ENCODE measurements at regions of chr3 and their contacts with region 1.

Region 1: DNA sequence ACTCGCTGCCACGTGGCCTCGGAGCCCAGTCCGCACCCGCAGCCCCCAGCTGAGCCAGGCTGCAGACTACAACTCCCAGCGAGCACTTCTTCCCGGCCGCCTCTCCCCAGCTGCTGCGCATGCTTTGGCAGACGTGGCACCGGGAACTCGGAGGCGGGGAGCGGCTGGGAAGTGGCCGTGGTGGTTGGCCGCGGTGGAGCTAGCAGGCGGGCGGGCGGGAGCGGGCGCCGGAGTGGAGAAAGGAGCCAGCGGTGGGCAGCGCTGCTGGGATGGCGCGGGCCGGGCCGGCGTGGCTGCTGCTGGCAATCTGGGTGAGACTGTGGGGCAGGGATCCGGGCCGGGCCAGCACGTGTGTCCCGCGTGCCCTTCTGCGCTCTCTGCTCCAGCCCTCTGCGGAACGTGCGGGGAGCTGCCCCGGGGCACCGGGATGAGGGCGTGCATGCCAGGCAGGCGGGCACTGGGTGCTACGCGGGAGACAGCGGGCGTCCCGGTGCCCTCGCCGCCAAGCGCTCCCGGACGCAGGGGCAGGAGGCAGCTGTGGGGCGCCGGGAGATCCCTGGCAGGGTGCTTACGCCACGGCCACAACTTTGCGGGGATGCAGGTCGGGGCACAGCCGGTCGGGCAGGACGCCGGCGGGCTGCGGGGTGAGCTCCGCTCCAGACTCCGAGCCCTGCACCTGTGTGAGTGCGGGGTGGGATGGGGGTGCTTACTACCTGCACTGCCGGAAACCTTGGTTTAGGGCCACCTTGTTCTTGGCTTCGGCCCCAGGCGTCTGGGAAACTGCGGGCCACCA is at the start of gene PDIA5:
- DNase-seq: peak; percentile 83 to 90 (median 86)
- ATAC-seq: peak; percentile 92
- H3K4me3 ChIP-seq: peak within 1 kb of the TSS; percentile 83
- H3K27ac ChIP-seq: peak within 1 kb of the TSS; percentile 72
- H3K4me1 ChIP-seq: peaks cover 25 to 34% of the 10 kb centered on the region in 2 experiments
- H3K27me3 ChIP-seq: no peaks in the 10 kb centered on the region
- CTCF ChIP-seq: no peak
- EP300 ChIP-seq: no peak
- POLR2A ChIP-seq: peak; percentile 75
- RAD21 ChIP-seq: no peak
- polyA plus RNA-seq, gene PDIA5: 3.4 to 4.7 TPM

Region 2: DNA sequence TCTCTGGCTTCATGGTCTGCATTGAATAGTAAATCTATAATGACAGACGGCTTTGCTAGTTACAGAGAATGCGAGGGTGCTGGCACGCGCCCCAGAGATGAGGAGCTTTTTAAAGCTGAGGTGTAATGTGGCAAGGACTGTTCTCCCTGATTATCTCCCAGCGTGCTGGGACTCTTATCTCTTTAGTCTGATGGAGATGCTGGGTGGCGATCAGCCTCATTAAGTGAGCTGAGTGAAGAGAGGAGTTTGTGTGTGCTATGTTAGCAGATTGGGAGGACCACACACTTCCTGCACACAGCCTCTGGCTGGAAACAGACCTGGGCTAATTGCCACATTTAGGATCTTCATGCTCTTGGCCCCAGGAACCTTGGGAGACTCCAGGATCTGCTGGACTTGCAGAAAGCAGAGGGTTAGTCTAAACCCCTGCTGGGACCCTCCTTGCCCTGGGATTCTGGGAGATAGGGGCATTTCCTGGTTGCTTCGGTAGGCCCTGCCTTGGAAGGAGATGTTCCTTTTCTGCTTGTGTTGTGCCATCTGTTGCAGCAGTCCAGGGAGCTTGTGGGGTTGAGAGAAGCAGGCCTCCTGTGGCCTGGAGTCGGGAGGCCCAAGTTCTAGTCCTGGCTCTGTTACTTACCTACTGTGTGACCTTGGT is 14.8 kb after region 1 on chr3:
- CTCF ChIA-PET with region 1: no interaction called
- POLR2A ChIA-PET with region 1: interaction called, 20 read pairs
- in situ Hi-C with region 1: no loop called
- intact Hi-C with region 1: no loop called
- DNase-seq: peak in 2 of 4 experiments; percentile 22 to 54
- ATAC-seq: peak; percentile 4; the same call in 2 of the 3 replicates
- H3K4me3 ChIP-seq: no peak overlapping the region
- H3K27ac ChIP-seq: peak overlapping the region; percentile 60
- H3K4me1 ChIP-seq: peaks cover 36 to 80% of the 10 kb centered on the region in 2 experiments
- H3K27me3 ChIP-seq: no peaks in the 10 kb centered on the region
- CTCF ChIP-seq: no peak
- EP300 ChIP-seq: no peak
- POLR2A ChIP-seq: no peak
- RAD21 ChIP-seq: no peak

Region 3: GRCh38 chr3:123412811-123413604 is 345.9 kb after region 1 on chr3:
- CTCF ChIA-PET with region 1: no interaction called
- POLR2A ChIA-PET with region 1: no interaction called
- in situ Hi-C with region 1: no loop called
- intact Hi-C with region 1: no loop called
- DNase-seq: no peak
- ATAC-seq: no peak
- H3K4me3 ChIP-seq: no peak overlapping the region
- H3K27ac ChIP-seq: no peak overlapping the region
- H3K4me1 ChIP-seq: no peaks in the 10 kb centered on the region
- H3K27me3 ChIP-seq: peaks cover 4 to 54% of the 10 kb centered on the region in 2 experiments
- CTCF ChIP-seq: no peak
- EP300 ChIP-seq: no peak
- POLR2A ChIP-seq: no peak
- RAD21 ChIP-seq: no peak